AG04449 (cell line): ENCODE measurements at regions of chrX and their contacts with region 1.

Region 1: GRCh38 chrX:16882702-16883486 is 12.7 kb upstream of the RBBP7 start:
- DNase-seq: no peak
- H3K4me3 ChIP-seq: peak overlapping the region; percentile 46
- CTCF ChIP-seq: peak; percentile 64

Region 2: DNA sequence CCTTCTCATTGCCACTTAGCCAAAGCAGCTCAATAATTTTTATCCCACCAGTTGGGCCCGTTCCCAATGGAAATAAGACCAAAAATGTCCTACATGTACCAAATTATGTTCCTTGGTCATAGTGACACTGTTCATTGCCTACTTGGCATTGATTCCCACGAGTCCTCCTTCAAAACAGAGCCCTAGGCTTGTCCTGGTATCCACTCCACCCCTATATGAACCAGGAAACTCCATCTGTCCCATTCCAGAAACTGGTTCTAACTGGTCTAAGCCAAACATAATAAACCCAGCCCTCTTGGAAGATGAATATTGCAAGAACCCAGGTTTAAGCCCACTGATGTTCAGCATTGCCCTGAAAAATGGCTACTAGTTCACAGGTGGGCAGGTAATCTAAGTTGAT is 263.9 kb before region 1 on chrX:
- CTCF ChIA-PET with region 1: no interaction called
- POLR2A ChIA-PET with region 1: no interaction called
- DNase-seq: no peak
- H3K4me3 ChIP-seq: no peak overlapping the region
- CTCF ChIP-seq: no peak

Region 3: GRCh38 chrX:16836371-16836770 is 46.5 kb before region 1 on chrX:
- CTCF ChIA-PET with region 1: interaction called, 11 read pairs
- POLR2A ChIA-PET with region 1: interaction called, 3 read pairs
- DNase-seq: no peak
- H3K4me3 ChIP-seq: no peak overlapping the region
- CTCF ChIP-seq: peak; percentile 33

Region 4: GRCh38 chrX:16867947-16868346 is 14.9 kb before region 1 on chrX:
- CTCF ChIA-PET with region 1: interaction called, 21 read pairs
- POLR2A ChIA-PET with region 1: interaction called, 7 read pairs
- DNase-seq: no peak
- H3K4me3 ChIP-seq: peak overlapping the region; percentile 73; the same call in 1 of the 2 replicates
- CTCF ChIP-seq: no peak